Activated naive CD4-positive, alpha-beta T cell treated with anti-CD3 and anti-CD28 coated beads for 36 hours (primary cell): ENCODE measurements at regions of chr2 and their contacts with region 1.

Region 1: GRCh38 chr2:38665854-38666555 is at the start of gene GALM:
- DNase-seq: peak; percentile 68
- H3K4me3 Mint-ChIP-seq: peak within 1 kb of the TSS; percentile 83
- H3K27ac Mint-ChIP-seq: peak within 1 kb of the TSS; percentile 97
- H3K4me1 Mint-ChIP-seq: peaks cover 69% of the 10 kb centered on the region
- H3K27me3 Mint-ChIP-seq: no peaks in the 10 kb centered on the region
- total RNA-seq, gene GALM: 31.3 to 31.9 TPM

Region 2: GRCh38 chr2:38690499-38691294 is 24.7 kb after region 1 on chr2:
- CTCF ChIA-PET with region 1: interaction called, 4 read pairs
- intact Hi-C with region 1: loop called (anchors 1 kb)
- DNase-seq: peak; percentile 50
- H3K4me3 Mint-ChIP-seq: no peak overlapping the region
- H3K27ac Mint-ChIP-seq: peak overlapping the region; percentile 71
- H3K4me1 Mint-ChIP-seq: peaks cover 57% of the 10 kb centered on the region
- H3K27me3 Mint-ChIP-seq: no peaks in the 10 kb centered on the region

Region 3: DNA sequence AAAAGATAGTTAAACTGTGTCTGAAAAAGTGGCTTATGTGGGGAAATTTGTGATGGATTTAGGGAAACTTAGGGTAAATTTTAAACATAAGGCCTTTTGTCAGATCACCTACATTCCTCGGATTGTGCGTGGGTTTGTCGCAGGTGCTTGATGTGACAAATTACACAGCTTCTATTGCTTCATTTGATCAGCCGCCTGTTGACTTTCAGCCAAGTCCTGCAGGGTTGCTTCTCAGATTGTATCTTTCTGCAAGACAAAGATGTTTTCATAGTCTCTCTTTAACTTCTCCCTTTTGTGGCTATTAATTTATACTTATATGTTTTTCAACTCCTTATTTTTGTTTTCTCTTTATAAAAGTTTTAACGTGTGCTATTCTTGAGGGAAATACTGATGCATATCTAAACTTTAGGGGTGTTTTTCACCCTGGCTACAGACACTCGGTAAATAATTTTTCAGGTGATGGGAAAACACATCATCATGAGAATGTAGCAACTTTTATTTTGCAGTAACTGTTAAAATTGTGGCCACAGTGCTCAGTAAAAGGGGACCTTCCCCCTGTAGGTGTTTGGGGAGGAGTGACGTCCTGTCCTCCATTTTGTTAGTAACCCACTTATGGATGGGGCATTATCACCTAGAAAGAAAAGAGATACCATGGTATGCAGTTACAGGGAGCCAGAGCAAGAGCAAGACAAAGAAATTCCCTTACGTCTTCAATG is 31.3 kb after region 1 on chr2:
- CTCF ChIA-PET with region 1: interaction called, 4 read pairs
- intact Hi-C with region 1: loop called (anchors 1 kb)
- DNase-seq: peak; percentile 59
- H3K4me3 Mint-ChIP-seq: no peak overlapping the region
- H3K27ac Mint-ChIP-seq: peak overlapping the region; percentile 86
- H3K4me1 Mint-ChIP-seq: peaks cover 72% of the 10 kb centered on the region
- H3K27me3 Mint-ChIP-seq: no peaks in the 10 kb centered on the region

Region 4: GRCh38 chr2:38709567-38710194 is 43.7 kb after region 1 on chr2:
- CTCF ChIA-PET with region 1: interaction called, 5 read pairs
- intact Hi-C with region 1: loop called (anchors 1 kb)
- DNase-seq: peak; percentile 80
- H3K4me3 Mint-ChIP-seq: peak overlapping the region; percentile 49
- H3K27ac Mint-ChIP-seq: peak overlapping the region; percentile 95
- H3K4me1 Mint-ChIP-seq: peaks cover 68% of the 10 kb centered on the region
- H3K27me3 Mint-ChIP-seq: no peaks in the 10 kb centered on the region

Region 5: DNA sequence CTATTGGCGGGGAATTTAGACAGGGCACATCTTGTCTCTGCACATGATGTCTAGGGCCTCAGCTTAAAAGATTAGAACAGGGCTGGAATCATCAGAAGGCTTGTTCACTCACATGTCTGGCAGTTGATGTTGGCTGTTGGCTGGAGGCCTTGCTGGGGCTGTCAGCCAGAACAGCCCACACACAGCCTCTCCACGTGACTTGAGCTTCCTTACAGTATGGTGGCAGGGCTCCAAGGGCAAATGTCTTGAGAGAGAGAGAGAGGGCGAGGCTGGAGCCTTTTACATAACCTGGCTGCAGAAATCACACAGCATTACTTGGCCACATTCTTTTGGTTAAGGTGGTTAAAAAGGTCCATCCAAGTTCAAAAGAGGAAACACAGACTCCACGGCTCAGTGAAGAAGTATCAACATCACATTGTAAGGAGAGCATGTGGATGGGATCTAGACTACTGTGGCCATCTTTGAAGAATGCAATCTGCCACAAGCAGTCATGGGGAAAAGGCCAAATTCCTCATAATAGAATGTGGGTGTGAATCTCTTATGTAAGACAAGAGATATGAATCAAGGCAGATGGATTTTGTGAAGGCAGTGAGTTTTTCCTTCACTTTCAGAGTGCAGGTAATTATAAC is 54.7 kb after region 1 on chr2:
- CTCF ChIA-PET with region 1: interaction called, 16 read pairs
- intact Hi-C with region 1: loop called (anchors 1 kb)
- DNase-seq: no peak
- H3K4me3 Mint-ChIP-seq: peak overlapping the region; percentile 11
- H3K27ac Mint-ChIP-seq: peak overlapping the region; percentile 86
- H3K4me1 Mint-ChIP-seq: peaks cover 65% of the 10 kb centered on the region
- H3K27me3 Mint-ChIP-seq: no peaks in the 10 kb centered on the region

Region 6: GRCh38 chr2:38750891-38751595 is 85.0 kb after region 1 on chr2 and contains the start of gene SRSF7:
- CTCF ChIA-PET with region 1: no interaction called
- intact Hi-C with region 1: loop called (anchors 1 kb)
- DNase-seq: peak; percentile 97
- H3K4me3 Mint-ChIP-seq: peak within 1 kb of the TSS; percentile 100
- H3K27ac Mint-ChIP-seq: peak within 1 kb of the TSS; percentile 100
- H3K4me1 Mint-ChIP-seq: peaks cover 52% of the 10 kb centered on the region
- H3K27me3 Mint-ChIP-seq: peaks cover 3% of the 10 kb centered on the region
- total RNA-seq, gene SRSF7: 212 to 217 TPM

Region 7: DNA sequence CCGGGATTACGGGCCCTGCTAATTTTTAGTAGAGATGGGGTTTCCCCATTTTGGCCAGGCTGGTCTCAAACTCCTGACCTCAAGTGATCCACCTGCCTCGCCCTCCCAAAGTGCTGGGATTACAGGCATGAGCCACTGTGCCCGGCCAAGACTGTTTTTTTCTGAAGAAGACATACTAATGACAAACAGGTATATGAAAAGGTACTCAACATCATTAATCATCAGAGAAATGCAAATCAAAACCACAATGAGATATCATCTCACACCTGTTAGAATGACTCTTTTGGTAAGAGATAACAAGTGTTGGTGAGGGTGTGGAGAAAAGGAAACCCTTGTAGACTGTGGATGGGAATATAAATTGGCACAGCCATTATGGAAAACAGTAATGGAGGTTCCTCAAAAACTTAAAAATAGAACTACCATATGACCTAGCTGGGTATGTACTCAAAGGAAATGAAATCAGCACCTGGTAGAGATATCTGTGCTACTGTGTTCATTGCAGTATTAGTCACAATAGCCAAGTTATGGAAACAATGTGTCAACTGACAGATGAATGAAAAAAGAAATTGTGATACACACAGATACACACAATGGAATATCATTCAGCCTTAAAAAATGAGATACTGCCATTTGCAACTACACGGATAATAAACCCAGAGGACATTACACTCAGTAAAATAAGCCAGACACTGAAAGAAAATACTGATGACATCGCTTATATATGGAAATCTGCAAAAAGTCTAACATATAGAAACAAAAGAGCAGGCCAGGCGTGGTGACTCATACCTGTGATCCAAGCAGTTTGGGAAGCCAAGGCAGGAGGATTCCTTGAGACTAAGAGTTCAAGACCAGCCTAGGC is 434.1 kb after region 1 on chr2:
- CTCF ChIA-PET with region 1: no interaction called
- intact Hi-C with region 1: loop called (anchors 1 kb)
- DNase-seq: peak; percentile 38
- H3K4me3 Mint-ChIP-seq: no peak overlapping the region
- H3K27ac Mint-ChIP-seq: peak overlapping the region; percentile 75
- H3K4me1 Mint-ChIP-seq: peaks cover 47% of the 10 kb centered on the region
- H3K27me3 Mint-ChIP-seq: no peaks in the 10 kb centered on the region